ENCODE measurements at regions of chr5 and their contacts with region 1.

Region 1: DNA sequence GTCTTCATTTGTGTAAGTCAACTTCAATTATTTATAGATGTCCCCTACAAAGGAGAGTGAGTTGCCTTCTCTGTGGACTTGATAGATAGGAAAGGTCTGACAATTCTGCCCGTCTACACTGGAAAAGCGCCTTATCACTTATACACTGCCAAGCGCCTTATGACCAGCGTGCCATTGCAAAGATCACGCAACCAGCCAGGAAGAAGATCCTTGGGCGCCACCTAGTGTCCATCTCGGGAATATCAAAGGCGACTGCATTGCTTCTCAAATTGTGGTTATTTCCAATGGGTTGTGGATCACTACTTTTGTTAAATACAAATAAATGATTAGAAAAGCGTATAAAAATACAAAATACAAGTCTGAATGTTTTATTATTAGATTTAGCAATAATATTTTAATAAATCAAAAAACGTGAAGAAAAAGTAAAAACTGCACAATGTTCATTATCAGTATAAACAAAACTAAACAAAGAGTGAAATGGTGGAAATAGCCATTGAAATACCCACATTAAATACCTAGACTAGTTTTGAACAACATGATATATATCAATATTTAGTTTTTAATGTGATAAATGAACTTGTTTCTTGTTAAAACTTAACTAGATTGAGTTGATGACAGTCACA is 27.8 kb downstream of the SUB1 start:
- DNase-seq: peak; percentile 91
- ATAC-seq: peak; percentile 89

Region 2: GRCh38 chr5:31844615-31845353 is 768.4 kb before region 1 on chr5:
- intact Hi-C with region 1: no loop called
- DNase-seq: no peak
- ATAC-seq: no peak

Region 3: GRCh38 chr5:32489791-32490582 is 123.2 kb before region 1 on chr5:
- intact Hi-C with region 1: loop called (anchors 10 kb)
- DNase-seq: peak; percentile 95
- ATAC-seq: peak; percentile 95

Measured in sciatic nerve (tissue), 2 donors.